ENCODE measurements at regions of chr16 and their contacts with region 1.

Region 1: GRCh38 chr16:75519881-75520280 is 16.0 kb downstream of the CHST5 start:
- DNase-seq: no peak
- H3K4me3 ChIP-seq: no peak overlapping the region
- H3K27ac ChIP-seq: no peak overlapping the region
- H3K4me1 ChIP-seq: peaks cover 6% of the 10 kb centered on the region
- CTCF ChIP-seq: no peak

Region 2: GRCh38 chr16:75471723-75472633 is 47.9 kb before region 1 on chr16:
- CTCF ChIA-PET with region 1: interaction called, 5 read pairs
- POLR2A ChIA-PET with region 1: interaction called, 3 read pairs
- intact Hi-C with region 1: loop called (anchors 1 kb)
- DNase-seq: peak; percentile 58
- H3K4me3 ChIP-seq: no peak overlapping the region
- H3K27ac ChIP-seq: no peak overlapping the region
- H3K4me1 ChIP-seq: no peaks in the 10 kb centered on the region
- CTCF ChIP-seq: peak; percentile 88

Region 3: GRCh38 chr16:75485230-75486013 is 34.5 kb before region 1 on chr16:
- CTCF ChIA-PET with region 1: interaction called, 10 read pairs
- POLR2A ChIA-PET with region 1: no interaction called
- intact Hi-C with region 1: no loop called
- DNase-seq: peak; percentile 15
- H3K4me3 ChIP-seq: no peak overlapping the region
- H3K27ac ChIP-seq: no peak overlapping the region
- H3K4me1 ChIP-seq: peaks cover 6% of the 10 kb centered on the region
- CTCF ChIP-seq: no peak

Region 4: GRCh38 chr16:75546293-75546692 is 26.4 kb after region 1 on chr16:
- CTCF ChIA-PET with region 1: no interaction called
- POLR2A ChIA-PET with region 1: no interaction called
- intact Hi-C with region 1: no loop called
- DNase-seq: no peak
- H3K4me3 ChIP-seq: no peak overlapping the region
- H3K27ac ChIP-seq: no peak overlapping the region
- H3K4me1 ChIP-seq: peaks cover 7% of the 10 kb centered on the region
- CTCF ChIP-seq: no peak

Region 5: GRCh38 chr16:75622761-75623605 is 103.1 kb after region 1 on chr16 and contains the start of gene ADAT1:
- CTCF ChIA-PET with region 1: interaction called, 9 read pairs
- POLR2A ChIA-PET with region 1: interaction called, 4 read pairs
- intact Hi-C with region 1: loop called (anchors 1 kb)
- DNase-seq: peak; percentile 98
- H3K4me3 ChIP-seq: peak within 1 kb of the TSS; percentile 82
- H3K27ac ChIP-seq: peak within 1 kb of the TSS; percentile 59
- H3K4me1 ChIP-seq: peaks cover 22% of the 10 kb centered on the region
- CTCF ChIP-seq: no peak
- total RNA-seq, gene ADAT1: 46.8 and 53.4 TPM in 2 replicates